ENCODE measurements at regions of chr6 and their contacts with region 1.

Region 1: DNA sequence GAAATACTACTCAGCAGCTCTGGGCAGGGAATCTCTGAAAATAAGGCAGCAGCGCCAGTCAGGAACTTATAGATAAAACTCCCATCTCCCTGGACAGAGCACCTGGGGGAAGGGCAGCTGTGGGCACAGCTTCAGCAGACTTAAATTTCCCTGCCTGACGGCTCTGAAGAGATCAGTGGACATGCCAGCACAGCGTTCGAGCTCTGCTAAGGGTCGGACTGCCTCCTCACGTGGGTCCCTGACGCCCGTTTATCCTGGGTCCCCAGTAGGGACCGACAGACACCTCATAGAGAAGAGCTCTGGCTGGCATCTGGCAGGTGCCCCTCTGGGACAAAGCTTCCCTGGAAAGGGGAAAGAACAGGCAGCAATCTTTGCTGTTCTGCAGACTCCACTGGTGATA is 59.0 kb downstream of the COL21A1 start:
- DNase-seq: no peak
- H3K4me3 ChIP-seq: no peak overlapping the region
- H3K27ac ChIP-seq: no peak overlapping the region
- H3K4me1 ChIP-seq: no peaks in the 10 kb centered on the region
- H3K27me3 ChIP-seq: no peaks in the 10 kb centered on the region
- CTCF ChIP-seq: no peak

Region 2: GRCh38 chr6:56009636-56010035 is 178.8 kb before region 1 on chr6:
- CTCF ChIA-PET with region 1: no interaction called
- dilution Hi-C with region 1: loop called (anchors 5 kb)
- in situ Hi-C with region 1: no loop called
- intact Hi-C with region 1: no loop called
- DNase-seq: no peak
- H3K4me3 ChIP-seq: no peak overlapping the region
- H3K27ac ChIP-seq: no peak overlapping the region
- H3K4me1 ChIP-seq: no peaks in the 10 kb centered on the region
- H3K27me3 ChIP-seq: no peaks in the 10 kb centered on the region
- CTCF ChIP-seq: no peak

Region 3: DNA sequence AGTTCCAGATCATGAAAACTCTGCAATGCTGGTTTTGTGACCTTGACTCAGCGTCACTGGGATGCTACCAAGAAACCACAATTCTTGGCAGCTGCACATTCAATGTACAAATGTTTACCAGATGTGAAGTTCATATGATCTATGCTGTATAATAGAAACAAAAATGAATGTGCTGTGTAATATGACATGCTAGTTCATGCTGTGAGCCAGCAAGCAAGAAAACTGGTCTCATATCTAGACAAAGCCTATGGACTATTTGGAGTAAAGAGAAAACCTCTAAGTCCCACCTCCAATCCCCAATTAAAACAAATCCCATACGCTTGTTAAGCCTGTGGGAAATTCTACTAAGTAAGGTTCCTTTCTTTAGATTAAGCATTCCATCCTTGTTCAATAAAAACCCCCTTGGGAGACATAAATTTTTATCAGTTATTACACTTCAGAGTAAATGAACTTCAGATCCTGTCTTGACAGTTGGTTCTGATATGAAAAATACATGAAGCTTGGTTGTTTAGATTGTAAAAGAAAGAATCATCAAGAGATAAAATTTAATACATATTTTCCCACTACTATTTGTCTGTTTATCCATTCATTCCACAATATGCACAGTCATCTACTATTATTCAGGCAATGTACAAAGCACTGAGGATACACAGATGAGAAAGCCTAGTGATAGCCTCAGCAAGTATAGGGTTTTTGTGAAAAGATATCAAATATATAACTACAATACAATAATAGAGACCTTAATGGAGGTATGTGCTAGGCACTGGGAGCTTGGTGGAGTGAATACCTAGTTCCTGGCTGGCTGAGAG is 38.8 kb after region 1 on chr6:
- CTCF ChIA-PET with region 1: no interaction called
- dilution Hi-C with region 1: no loop called
- in situ Hi-C with region 1: no loop called
- intact Hi-C with region 1: no loop called
- DNase-seq: no peak
- H3K4me3 ChIP-seq: no peak overlapping the region
- H3K27ac ChIP-seq: no peak overlapping the region
- H3K4me1 ChIP-seq: peaks cover 14% of the 10 kb centered on the region
- H3K27me3 ChIP-seq: no peaks in the 10 kb centered on the region
- CTCF ChIP-seq: no peak

Region 4: GRCh38 chr6:56268266-56268665 is 79.8 kb after region 1 on chr6:
- CTCF ChIA-PET with region 1: no interaction called
- dilution Hi-C with region 1: no loop called
- in situ Hi-C with region 1: no loop called
- intact Hi-C with region 1: no loop called
- DNase-seq: no peak
- H3K4me3 ChIP-seq: no peak overlapping the region
- H3K27ac ChIP-seq: no peak overlapping the region
- H3K4me1 ChIP-seq: no peaks in the 10 kb centered on the region
- H3K27me3 ChIP-seq: no peaks in the 10 kb centered on the region
- CTCF ChIP-seq: no peak

Region 5: GRCh38 chr6:56311061-56311460 is 122.6 kb after region 1 on chr6:
- CTCF ChIA-PET with region 1: no interaction called
- dilution Hi-C with region 1: no loop called
- in situ Hi-C with region 1: no loop called
- intact Hi-C with region 1: no loop called
- DNase-seq: no peak
- H3K4me3 ChIP-seq: no peak overlapping the region
- H3K27ac ChIP-seq: no peak overlapping the region
- H3K4me1 ChIP-seq: no peaks in the 10 kb centered on the region
- H3K27me3 ChIP-seq: no peaks in the 10 kb centered on the region
- CTCF ChIP-seq: no peak

Measured in mammary epithelial cell (primary cell).